Activated naive CD4-positive, alpha-beta T cell treated with anti-CD3 and anti-CD28 coated beads for 36 hours (primary cell): ENCODE measurements at regions of chr2 and their contacts with region 1.

Region 1: GRCh38 chr2:105744091-105744908 is 412 bp upstream of the NCK2 start:
- DNase-seq: peak; percentile 63
- H3K4me3 Mint-ChIP-seq: peak overlapping the region; percentile 67
- H3K27ac Mint-ChIP-seq: peak overlapping the region; percentile 87
- H3K4me1 Mint-ChIP-seq: peaks cover 70% of the 10 kb centered on the region
- H3K27me3 Mint-ChIP-seq: no peaks in the 10 kb centered on the region

Region 2: GRCh38 chr2:105183555-105184323 is 560.6 kb before region 1 on chr2:
- CTCF ChIA-PET with region 1: no interaction called
- intact Hi-C with region 1: no loop called
- DNase-seq: no peak
- H3K4me3 Mint-ChIP-seq: no peak overlapping the region
- H3K27ac Mint-ChIP-seq: no peak overlapping the region
- H3K4me1 Mint-ChIP-seq: no peaks in the 10 kb centered on the region
- H3K27me3 Mint-ChIP-seq: peaks cover 2% of the 10 kb centered on the region

Region 3: DNA sequence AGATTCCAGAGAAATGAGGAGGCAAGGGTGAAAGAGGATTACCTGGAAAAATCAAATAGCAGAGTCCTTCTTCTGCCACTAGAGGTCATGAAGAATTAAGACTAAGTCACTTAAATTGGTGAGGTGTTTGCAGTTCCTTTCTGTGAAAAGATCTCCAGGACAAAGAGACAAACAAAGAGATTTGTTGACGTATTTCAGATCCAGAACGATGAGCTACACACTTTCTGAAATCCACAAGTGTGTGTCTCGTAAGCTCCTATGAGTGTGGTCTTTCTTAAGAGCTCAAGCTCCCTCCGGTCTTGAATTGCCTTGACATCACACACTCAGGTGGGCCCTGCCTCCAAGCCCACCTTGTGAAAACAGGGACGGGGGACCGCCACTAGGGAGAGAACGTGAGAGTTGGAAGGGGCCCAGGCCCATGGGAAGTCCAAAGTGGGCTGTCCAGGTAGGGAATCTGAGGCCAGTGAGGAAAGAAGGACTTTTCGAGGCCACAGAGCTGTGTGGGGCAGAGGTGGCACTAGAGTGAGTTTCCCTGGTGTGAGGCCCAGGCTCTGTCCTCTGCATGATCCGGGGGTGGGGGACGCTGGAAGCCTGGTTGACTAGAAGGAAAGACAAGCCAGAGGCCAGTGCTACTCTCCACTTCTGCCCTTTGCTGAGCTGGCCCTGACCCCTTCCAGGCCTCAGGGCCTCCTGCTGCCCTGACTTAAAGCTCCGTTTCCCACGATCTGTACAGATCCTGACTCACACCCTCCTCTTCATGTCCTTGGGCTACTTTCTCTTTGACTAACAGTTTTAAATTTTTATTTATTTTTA is 167.7 kb before region 1 on chr2:
- CTCF ChIA-PET with region 1: interaction called, 5 read pairs
- intact Hi-C with region 1: loop called (anchors 1 kb)
- DNase-seq: no peak
- H3K4me3 Mint-ChIP-seq: no peak overlapping the region
- H3K27ac Mint-ChIP-seq: peak overlapping the region; percentile 71
- H3K4me1 Mint-ChIP-seq: peaks cover 16% of the 10 kb centered on the region
- H3K27me3 Mint-ChIP-seq: no peaks in the 10 kb centered on the region

Region 4: DNA sequence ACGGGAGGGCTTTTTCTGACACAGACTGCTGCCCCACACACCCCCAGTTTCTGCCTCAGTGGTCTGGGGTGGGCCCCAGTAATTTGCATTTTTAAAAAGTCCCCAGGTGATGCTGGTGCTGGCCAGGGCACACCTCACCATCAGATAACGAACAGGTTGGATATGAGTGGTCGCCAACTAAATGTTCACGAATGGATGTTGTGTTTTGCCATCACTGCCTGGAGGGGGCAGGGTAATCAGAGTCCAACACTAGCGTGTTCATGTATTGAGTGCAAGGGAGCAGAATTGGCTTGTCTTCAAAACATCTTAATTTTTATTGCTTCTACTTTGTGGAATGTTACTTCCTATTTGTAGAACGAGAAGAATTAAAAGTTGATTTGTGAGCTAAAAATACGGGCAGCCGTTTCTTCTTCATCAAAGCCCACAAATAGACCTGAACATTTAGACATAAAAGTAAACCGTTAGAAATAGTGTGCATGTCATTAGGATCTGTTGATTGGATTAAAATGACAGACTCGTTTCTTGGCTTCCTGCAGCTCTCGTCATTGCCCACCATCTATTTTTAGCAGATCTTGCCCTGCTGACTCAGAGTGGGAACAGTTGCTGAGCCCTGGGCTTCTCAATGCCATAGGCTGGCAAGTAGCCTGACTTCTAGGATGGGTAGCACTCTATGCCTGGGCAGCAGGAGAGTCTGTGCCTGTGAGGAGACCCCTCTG is 45.6 kb after region 1 on chr2:
- CTCF ChIA-PET with region 1: no interaction called
- intact Hi-C with region 1: loop called (anchors 1 kb)
- DNase-seq: peak; percentile 86
- H3K4me3 Mint-ChIP-seq: peak overlapping the region; percentile 65
- H3K27ac Mint-ChIP-seq: peak overlapping the region; percentile 88
- H3K4me1 Mint-ChIP-seq: peaks cover 94% of the 10 kb centered on the region
- H3K27me3 Mint-ChIP-seq: no peaks in the 10 kb centered on the region

Region 5: GRCh38 chr2:105858868-105859693 is 114.8 kb after region 1 on chr2:
- CTCF ChIA-PET with region 1: interaction called, 3 read pairs
- intact Hi-C with region 1: loop called (anchors 1 kb)
- DNase-seq: peak; percentile 46
- H3K4me3 Mint-ChIP-seq: no peak overlapping the region
- H3K27ac Mint-ChIP-seq: peak overlapping the region; percentile 91
- H3K4me1 Mint-ChIP-seq: peaks cover 93% of the 10 kb centered on the region
- H3K27me3 Mint-ChIP-seq: no peaks in the 10 kb centered on the region

Region 6: GRCh38 chr2:106160786-106161261 is 416.5 kb after region 1 on chr2:
- CTCF ChIA-PET with region 1: no interaction called
- intact Hi-C with region 1: loop called (anchors 10 kb)
- DNase-seq: peak; percentile 67
- H3K4me3 Mint-ChIP-seq: peak overlapping the region; percentile 79
- H3K27ac Mint-ChIP-seq: peak overlapping the region; percentile 95
- H3K4me1 Mint-ChIP-seq: peaks cover 87% of the 10 kb centered on the region
- H3K27me3 Mint-ChIP-seq: no peaks in the 10 kb centered on the region